ENCODE measurements at regions of chr16 and their contacts with region 1.

Region 1: GRCh38 chr16:82203198-82203597 is 33.2 kb upstream of the MPHOSPH6 start:
- DNase-seq: no peak
- H3K4me3 ChIP-seq: no peak overlapping the region
- H3K27ac ChIP-seq: no peak overlapping the region
- H3K4me1 ChIP-seq: no peaks in the 10 kb centered on the region
- H3K27me3 ChIP-seq: no peaks in the 10 kb centered on the region

Region 2: GRCh38 chr16:82229796-82230619 is 26.8 kb after region 1 on chr16:
- CTCF ChIA-PET with region 1: no interaction called
- POLR2A ChIA-PET with region 1: no interaction called
- DNase-seq: peak; percentile 38 to 58 (median 44)
- H3K4me3 ChIP-seq: no peak overlapping the region
- H3K27ac ChIP-seq: no peak overlapping the region
- H3K4me1 ChIP-seq: no peaks in the 10 kb centered on the region
- H3K27me3 ChIP-seq: peaks cover 0 to 6% (median 0%) of the 10 kb centered on the region in 5 experiments

Region 3: GRCh38 chr16:83158320-83158957 is 955.2 kb after region 1 on chr16:
- CTCF ChIA-PET with region 1: no interaction called
- POLR2A ChIA-PET with region 1: interaction called, 10 read pairs
- DNase-seq: no peak
- H3K4me3 ChIP-seq: no peak overlapping the region
- H3K27ac ChIP-seq: no peak overlapping the region
- H3K4me1 ChIP-seq: no peaks in the 10 kb centered on the region
- H3K27me3 ChIP-seq: no peaks in the 10 kb centered on the region